Colonic mucosa (tissue), 4 donors: ENCODE measurements at regions of chr1 and their contacts with region 1.

Region 1: GRCh38 chr1:163174524-163175437 is 27.9 kb downstream of the RGS5 start:
- DNase-seq: peak; percentile 60
- H3K4me3 ChIP-seq: no peak overlapping the region
- H3K27ac ChIP-seq: no peak overlapping the region
- H3K4me1 ChIP-seq: no peaks in the 10 kb centered on the region
- H3K27me3 ChIP-seq: no peaks in the 10 kb centered on the region
- CTCF ChIP-seq: peak; percentile 78

Region 2: GRCh38 chr1:162854245-162854882 is 320.4 kb before region 1 on chr1:
- intact Hi-C with region 1: loop called (anchors 5 kb)
- DNase-seq: peak; percentile 69
- H3K4me3 ChIP-seq: no peak overlapping the region
- H3K27ac ChIP-seq: no peak overlapping the region
- H3K4me1 ChIP-seq: no peaks in the 10 kb centered on the region
- H3K27me3 ChIP-seq: no peaks in the 10 kb centered on the region
- CTCF ChIP-seq: peak; percentile 68

Region 3: GRCh38 chr1:162878000-162878596 is 296.7 kb before region 1 on chr1:
- intact Hi-C with region 1: loop called (anchors 2 kb)
- DNase-seq: peak; percentile 51
- H3K4me3 ChIP-seq: no peak overlapping the region
- H3K27ac ChIP-seq: no peak overlapping the region
- H3K4me1 ChIP-seq: no peaks in the 10 kb centered on the region
- H3K27me3 ChIP-seq: no peaks in the 10 kb centered on the region
- CTCF ChIP-seq: peak; percentile 19

Region 4: GRCh38 chr1:163071405-163072255 is 103.2 kb before region 1 on chr1:
- intact Hi-C with region 1: loop called (anchors 10 kb)
- DNase-seq: peak; percentile 41
- H3K4me3 ChIP-seq: no peak overlapping the region
- H3K27ac ChIP-seq: no peak overlapping the region
- H3K4me1 ChIP-seq: no peaks in the 10 kb centered on the region
- H3K27me3 ChIP-seq: no peaks in the 10 kb centered on the region
- CTCF ChIP-seq: peak; percentile 39